ENCODE measurements at regions of chrX and their contacts with region 1.

Region 1: GRCh38 chrX:56978172-56978571 is 17.2 kb downstream of the SPIN3 start:
- DNase-seq: no peak
- H3K4me3 ChIP-seq: no peak overlapping the region
- H3K27ac ChIP-seq: no peak overlapping the region
- H3K4me1 ChIP-seq: no peaks in the 10 kb centered on the region
- H3K27me3 ChIP-seq: no peaks in the 10 kb centered on the region
- CTCF ChIP-seq: peak; percentile 41 to 63 (median 48)

Region 2: DNA sequence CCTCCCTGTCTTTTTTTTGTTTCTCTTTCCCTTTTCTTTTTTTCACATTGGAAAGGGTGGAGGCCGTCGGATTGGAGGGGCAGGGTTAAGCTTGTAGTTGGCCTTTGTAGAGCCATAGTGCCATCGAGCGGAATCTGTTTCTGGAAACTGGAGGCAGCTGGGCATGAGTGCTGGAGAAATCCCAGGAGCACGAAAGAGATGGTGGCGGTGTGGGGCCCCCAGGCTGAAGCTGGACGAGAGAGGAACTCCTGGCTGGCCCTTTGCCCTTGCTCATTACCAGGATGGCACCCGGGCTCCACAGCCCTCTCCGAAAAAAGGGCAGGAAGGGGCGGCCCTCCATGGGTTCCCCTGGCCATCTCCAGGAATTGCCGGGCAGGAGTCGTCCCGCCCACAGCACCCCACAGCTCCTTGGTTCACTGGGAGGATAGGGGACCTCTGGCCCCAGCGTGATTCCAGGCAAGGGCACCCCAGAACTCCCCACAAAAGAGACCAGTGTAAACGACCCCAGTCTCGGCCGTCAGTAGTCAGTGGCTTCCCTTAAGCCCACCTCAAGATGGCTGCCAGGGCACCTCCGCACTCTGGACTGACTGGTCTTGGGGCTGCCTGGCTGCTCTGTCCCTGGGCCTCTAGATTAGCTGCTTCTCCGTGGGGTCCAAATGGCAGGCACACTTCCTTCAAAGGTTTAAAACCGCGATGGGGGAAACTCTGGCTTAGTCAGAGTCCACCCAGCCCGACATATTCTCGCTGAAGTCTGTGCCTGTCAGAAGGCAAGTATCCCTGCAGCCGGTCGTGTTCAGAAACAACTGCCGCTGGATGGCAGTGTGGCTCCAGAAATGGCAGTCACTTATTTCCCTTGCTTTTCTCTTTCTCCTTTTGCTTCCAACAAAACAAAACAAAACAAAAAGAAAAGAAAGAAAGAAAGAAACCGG is 175.0 kb before region 1 on chrX:
- intact Hi-C with region 1: loop called (anchors 1 kb)
- DNase-seq: peak in 1 of 2 donors; percentile 90
- H3K4me3 ChIP-seq: peak overlapping the region; percentile 50 to 72
- H3K27ac ChIP-seq: peak overlapping the region; percentile 83 to 88
- H3K4me1 ChIP-seq: peaks cover 0 to 8% of the 10 kb centered on the region in 2 donors
- H3K27me3 ChIP-seq: no peaks in the 10 kb centered on the region
- CTCF ChIP-seq: peak; percentile 64 to 72 (median 65)

Region 3: GRCh38 chrX:56932106-56932505 is 46.1 kb before region 1 on chrX:
- intact Hi-C with region 1: no loop called
- DNase-seq: no peak
- H3K4me3 ChIP-seq: no peak overlapping the region
- H3K27ac ChIP-seq: no peak overlapping the region
- H3K4me1 ChIP-seq: no peaks in the 10 kb centered on the region
- H3K27me3 ChIP-seq: no peaks in the 10 kb centered on the region
- CTCF ChIP-seq: no peak

Region 4: DNA sequence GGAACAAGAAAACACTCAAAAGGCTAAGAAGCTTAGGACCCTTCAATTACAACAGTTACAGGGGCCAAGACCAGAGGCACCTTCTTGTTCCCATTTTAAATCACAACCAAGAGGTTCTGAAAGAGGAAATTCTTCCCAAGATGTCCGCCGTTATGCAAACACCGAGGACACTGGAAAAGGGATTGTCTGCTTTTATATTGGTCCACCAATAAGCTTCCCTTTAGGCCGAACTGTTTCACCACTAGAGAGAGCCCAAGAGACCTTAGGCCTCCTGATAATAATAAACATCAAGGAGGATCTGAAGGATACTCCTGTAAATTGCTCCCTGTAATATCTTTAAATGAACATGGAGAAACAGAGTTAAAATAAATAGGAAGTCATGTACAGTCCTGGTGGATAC is 794.5 kb after region 1 on chrX:
- intact Hi-C with region 1: no loop called
- DNase-seq: no peak
- H3K4me3 ChIP-seq: no peak overlapping the region
- H3K27ac ChIP-seq: no peak overlapping the region
- H3K4me1 ChIP-seq: no peaks in the 10 kb centered on the region
- H3K27me3 ChIP-seq: no peaks in the 10 kb centered on the region
- CTCF ChIP-seq: no peak

Measured in ascending aorta (tissue), 2 donors.